ENCODE measurements at regions of chr22 and their contacts with region 1.

Region 1: GRCh38 chr22:36470162-36470993 is 11.1 kb downstream of the TXN2 start:
- DNase-seq: peak; percentile 85
- H3K4me3 ChIP-seq: no peak overlapping the region
- H3K27ac ChIP-seq: peak overlapping the region; percentile 50 to 60
- H3K4me1 ChIP-seq: peaks cover 12% of the 10 kb centered on the region
- H3K27me3 ChIP-seq: no peaks in the 10 kb centered on the region
- CTCF ChIP-seq: peak; percentile 77 to 90 (median 85)
- POLR2A ChIP-seq: no peak

Region 2: DNA sequence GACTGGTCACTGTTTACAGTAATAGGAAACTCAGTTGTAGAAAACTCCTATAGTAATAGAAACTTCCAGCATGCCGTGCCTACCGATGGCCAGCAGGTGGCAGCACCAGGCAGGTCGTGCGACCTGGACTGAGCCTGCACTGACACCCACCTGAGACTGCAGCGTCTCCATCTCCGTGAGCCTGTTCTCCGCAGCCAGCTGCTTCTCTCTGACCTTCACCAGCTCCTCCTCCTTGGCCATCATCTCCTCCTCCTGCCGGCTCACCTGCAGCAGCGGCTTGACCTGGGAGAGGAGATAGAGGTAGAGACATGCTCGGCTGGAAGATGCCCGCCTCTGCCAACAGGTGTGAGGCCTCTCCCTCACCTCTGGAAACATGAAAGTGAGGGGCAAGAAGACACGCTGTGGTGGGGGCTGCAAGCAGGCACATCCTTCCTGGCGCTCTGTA is 169.0 kb before region 1 on chr22:
- intact Hi-C with region 1: loop called (anchors 5 kb)
- DNase-seq: peak; percentile 81
- H3K4me3 ChIP-seq: no peak overlapping the region
- H3K27ac ChIP-seq: no peak overlapping the region
- H3K4me1 ChIP-seq: no peaks in the 10 kb centered on the region
- H3K27me3 ChIP-seq: no peaks in the 10 kb centered on the region
- CTCF ChIP-seq: peak; percentile 95 to 98 (median 97)
- POLR2A ChIP-seq: no peak

Region 3: DNA sequence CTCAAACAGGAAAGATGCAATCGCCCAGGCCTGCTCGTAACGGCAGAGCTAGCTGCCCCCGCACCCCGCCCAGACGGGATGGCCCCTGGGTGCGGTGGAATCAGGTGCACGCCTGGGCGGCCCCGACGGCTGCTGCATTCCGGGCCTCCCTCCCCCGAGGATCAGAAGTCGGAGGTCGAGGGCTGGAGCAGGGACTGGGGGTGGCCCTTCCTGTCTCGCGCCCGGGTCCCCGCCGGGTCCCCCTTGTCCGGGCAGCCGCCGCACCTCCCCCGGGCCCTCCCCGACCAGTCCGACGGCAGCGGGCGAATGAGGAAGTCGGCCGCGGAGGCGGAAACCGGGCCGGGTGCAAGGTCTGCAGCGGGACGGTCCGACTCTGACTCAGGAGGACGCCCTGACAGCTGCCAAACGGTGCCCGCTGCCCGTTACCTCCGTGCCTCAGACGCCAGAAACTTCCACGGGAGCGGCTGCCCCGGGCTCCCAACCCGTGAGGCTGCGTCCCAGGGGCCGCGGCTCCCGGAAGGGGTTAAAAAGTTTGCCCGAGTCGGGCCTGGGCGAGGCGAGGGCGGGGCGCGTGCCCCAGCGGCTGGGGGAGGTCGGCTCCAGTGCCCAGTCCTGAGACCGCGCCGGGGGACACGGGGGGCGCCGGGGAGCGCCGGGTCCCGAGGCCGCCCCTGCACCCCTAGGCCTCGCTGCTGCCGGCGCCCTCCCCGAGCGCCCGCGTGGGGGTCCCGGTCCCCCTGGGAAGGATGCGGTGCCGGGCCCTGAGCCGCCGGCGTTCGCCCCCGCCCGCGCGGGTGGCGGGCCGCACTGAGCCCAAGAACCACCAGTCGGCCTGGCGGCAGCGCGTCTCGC is 83.3 kb before region 1 on chr22:
- intact Hi-C with region 1: no loop called
- DNase-seq: peak; percentile 36
- H3K4me3 ChIP-seq: peak overlapping the region; percentile 80 to 88
- H3K27ac ChIP-seq: peak overlapping the region; percentile 84 to 93
- H3K4me1 ChIP-seq: peaks cover 20% of the 10 kb centered on the region
- H3K27me3 ChIP-seq: no peaks in the 10 kb centered on the region
- CTCF ChIP-seq: no peak
- POLR2A ChIP-seq: no peak

Region 4: GRCh38 chr22:38017272-38017920 is 1547.0 kb after region 1 on chr22:
- intact Hi-C with region 1: no loop called
- DNase-seq: peak; percentile 95
- H3K4me3 ChIP-seq: no peak overlapping the region
- H3K27ac ChIP-seq: peak overlapping the region; percentile 92 to 93
- H3K4me1 ChIP-seq: peaks cover 35% of the 10 kb centered on the region
- H3K27me3 ChIP-seq: no peaks in the 10 kb centered on the region
- CTCF ChIP-seq: no peak
- POLR2A ChIP-seq: no peak

Measured in testis (tissue), 5 donors.